B cell (primary cell): ENCODE measurements at regions of chr13 and their contacts with region 1.

Region 1: GRCh38 chr13:99331881-99332293 is 24.7 kb upstream of the GPR183 start:
- DNase-seq: no peak
- ATAC-seq: no peak
- H3K4me3 ChIP-seq: no peak overlapping the region
- H3K4me3 Mint-ChIP-seq: no peak overlapping the region
- H3K27ac ChIP-seq: no peak overlapping the region
- H3K27ac Mint-ChIP-seq: no peak overlapping the region
- H3K4me1 ChIP-seq: peaks cover 13 to 24% of the 10 kb centered on the region in 2 donors
- H3K4me1 Mint-ChIP-seq: peaks cover 44% of the 10 kb centered on the region
- H3K27me3 ChIP-seq: no peaks in the 10 kb centered on the region
- H3K27me3 Mint-ChIP-seq: no peaks in the 10 kb centered on the region
- CTCF ChIP-seq: no peak

Region 2: DNA sequence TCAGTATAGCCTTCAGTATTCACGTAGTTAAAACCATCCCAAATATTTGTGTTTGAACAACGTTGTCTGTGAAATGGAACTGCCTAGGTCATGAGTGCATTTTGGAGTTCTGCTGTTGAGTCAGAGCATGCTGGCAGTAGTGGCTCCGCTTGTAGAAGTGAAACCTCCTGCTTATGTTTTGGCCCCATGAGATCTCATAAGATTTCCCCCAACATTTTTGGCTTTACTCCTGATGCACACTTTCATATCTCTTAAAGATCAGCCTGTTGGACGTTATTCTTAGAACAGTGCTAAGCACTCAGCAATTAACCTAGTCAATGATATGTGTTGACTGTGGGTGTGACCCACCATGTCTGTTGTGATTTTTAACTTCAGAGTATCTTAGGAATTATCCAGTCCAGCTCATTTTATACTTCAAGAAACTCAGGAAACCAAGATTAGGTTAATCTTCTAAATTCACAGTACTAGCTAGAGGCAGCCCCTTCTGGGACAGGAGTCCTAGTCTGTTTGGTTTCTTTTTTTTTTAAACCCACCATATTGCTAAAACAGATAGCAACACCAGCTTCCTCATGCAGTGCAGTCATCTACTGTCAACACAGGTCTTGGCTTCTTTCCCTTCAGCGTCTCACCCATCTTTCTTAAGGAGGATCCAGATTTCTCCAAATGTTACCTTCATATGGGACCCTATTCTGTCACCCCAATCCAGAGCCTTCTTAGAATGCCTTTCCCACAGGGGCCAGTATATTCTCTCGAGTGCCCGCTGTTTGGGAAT is 1871.7 kb before region 1 on chr13:
- CTCF ChIA-PET with region 1: no interaction called
- POLR2A ChIA-PET with region 1: no interaction called
- intact Hi-C with region 1: no loop called
- DNase-seq: peak; percentile 62
- ATAC-seq: peak; percentile 91
- H3K4me3 ChIP-seq: peak overlapping the region in 2 of 5 experiments; percentile 1 to 6
- H3K4me3 Mint-ChIP-seq: peak overlapping the region; percentile 50
- H3K27ac ChIP-seq: peak overlapping the region; percentile 21 to 69
- H3K27ac Mint-ChIP-seq: peak overlapping the region; percentile 82
- H3K4me1 ChIP-seq: peaks cover 22 to 23% of the 10 kb centered on the region in 2 donors
- H3K4me1 Mint-ChIP-seq: peaks cover 25% of the 10 kb centered on the region
- H3K27me3 ChIP-seq: no peaks in the 10 kb centered on the region
- H3K27me3 Mint-ChIP-seq: no peaks in the 10 kb centered on the region
- CTCF ChIP-seq: no peak

Region 3: DNA sequence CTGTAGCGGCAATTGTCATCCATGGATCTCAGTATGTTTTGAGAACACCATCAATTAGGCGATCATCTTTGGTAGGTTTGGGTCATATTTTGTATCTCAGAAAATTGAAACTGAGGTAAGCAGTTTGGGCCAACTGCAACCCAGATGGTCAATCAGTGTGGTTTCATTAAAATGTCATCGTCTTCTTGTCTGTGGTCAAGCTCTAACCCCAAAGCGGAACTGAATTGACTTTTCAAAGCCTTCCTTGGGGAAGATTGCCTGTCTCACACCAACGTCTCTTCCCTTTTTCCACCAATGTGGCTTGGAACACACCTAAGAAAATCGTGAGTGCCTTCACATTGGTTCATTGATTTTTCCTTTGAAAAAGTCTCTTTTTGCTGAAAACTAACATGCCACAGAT is 187.6 kb before region 1 on chr13:
- CTCF ChIA-PET with region 1: no interaction called
- POLR2A ChIA-PET with region 1: no interaction called
- intact Hi-C with region 1: no loop called
- DNase-seq: no peak
- ATAC-seq: no peak
- H3K4me3 ChIP-seq: no peak overlapping the region
- H3K4me3 Mint-ChIP-seq: no peak overlapping the region
- H3K27ac ChIP-seq: no peak overlapping the region
- H3K27ac Mint-ChIP-seq: no peak overlapping the region
- H3K4me1 ChIP-seq: peaks cover 0 to 3% of the 10 kb centered on the region in 2 donors
- H3K4me1 Mint-ChIP-seq: peaks cover 4% of the 10 kb centered on the region
- H3K27me3 ChIP-seq: peaks cover 0 to 21% (median 12%) of the 10 kb centered on the region in 4 experiments
- H3K27me3 Mint-ChIP-seq: peaks cover 36% of the 10 kb centered on the region
- CTCF ChIP-seq: no peak

Region 4: DNA sequence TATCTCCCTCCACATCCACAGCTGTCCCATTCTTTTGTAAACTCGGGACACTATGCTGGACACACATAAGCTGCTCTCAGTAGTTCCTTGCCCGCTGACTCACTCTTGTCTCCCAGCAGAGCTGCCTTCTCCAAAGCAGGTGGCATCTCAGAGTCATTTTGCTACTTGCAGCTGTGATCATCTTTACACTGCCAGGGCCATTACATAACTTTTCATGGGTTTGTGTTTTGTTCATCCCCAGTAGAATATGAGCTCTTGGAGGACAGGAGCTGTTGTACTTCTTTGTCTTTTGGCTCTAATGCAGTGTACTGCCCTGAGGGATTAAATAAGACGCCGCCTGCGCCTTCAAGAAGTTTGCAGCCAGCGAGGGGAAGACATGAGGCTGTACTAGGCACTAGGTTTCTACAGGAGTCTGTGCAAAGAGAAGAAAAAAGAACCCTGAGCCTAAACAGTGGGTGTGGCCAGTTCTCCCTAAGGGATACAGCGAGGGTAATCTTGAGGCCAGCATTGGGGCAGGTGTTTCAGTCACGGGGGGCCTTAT is 16.1 kb after region 1 on chr13:
- CTCF ChIA-PET with region 1: interaction called, 14 read pairs
- POLR2A ChIA-PET with region 1: interaction called, 4 read pairs
- intact Hi-C with region 1: loop called (anchors 2 kb)
- DNase-seq: peak; percentile 48
- ATAC-seq: peak; percentile 69
- H3K4me3 ChIP-seq: no peak overlapping the region
- H3K4me3 Mint-ChIP-seq: peak overlapping the region; percentile 57
- H3K27ac ChIP-seq: peak overlapping the region; percentile 13 to 17
- H3K27ac Mint-ChIP-seq: peak overlapping the region; percentile 92
- H3K4me1 ChIP-seq: peaks cover 19 to 43% of the 10 kb centered on the region in 2 donors
- H3K4me1 Mint-ChIP-seq: peaks cover 64% of the 10 kb centered on the region
- H3K27me3 ChIP-seq: no peaks in the 10 kb centered on the region
- H3K27me3 Mint-ChIP-seq: no peaks in the 10 kb centered on the region
- CTCF ChIP-seq: no peak

Region 5: GRCh38 chr13:99590519-99591011 is 258.7 kb after region 1 on chr13:
- CTCF ChIA-PET with region 1: no interaction called
- POLR2A ChIA-PET with region 1: no interaction called
- intact Hi-C with region 1: no loop called
- DNase-seq: no peak
- ATAC-seq: no peak
- H3K4me3 ChIP-seq: no peak overlapping the region
- H3K4me3 Mint-ChIP-seq: no peak overlapping the region
- H3K27ac ChIP-seq: no peak overlapping the region
- H3K27ac Mint-ChIP-seq: no peak overlapping the region
- H3K4me1 ChIP-seq: no peaks in the 10 kb centered on the region
- H3K4me1 Mint-ChIP-seq: no peaks in the 10 kb centered on the region
- H3K27me3 ChIP-seq: no peaks in the 10 kb centered on the region
- H3K27me3 Mint-ChIP-seq: no peaks in the 10 kb centered on the region
- CTCF ChIP-seq: no peak